BJ (cell line): ENCODE measurements at regions of chr7 and their contacts with region 1.

Region 1: DNA sequence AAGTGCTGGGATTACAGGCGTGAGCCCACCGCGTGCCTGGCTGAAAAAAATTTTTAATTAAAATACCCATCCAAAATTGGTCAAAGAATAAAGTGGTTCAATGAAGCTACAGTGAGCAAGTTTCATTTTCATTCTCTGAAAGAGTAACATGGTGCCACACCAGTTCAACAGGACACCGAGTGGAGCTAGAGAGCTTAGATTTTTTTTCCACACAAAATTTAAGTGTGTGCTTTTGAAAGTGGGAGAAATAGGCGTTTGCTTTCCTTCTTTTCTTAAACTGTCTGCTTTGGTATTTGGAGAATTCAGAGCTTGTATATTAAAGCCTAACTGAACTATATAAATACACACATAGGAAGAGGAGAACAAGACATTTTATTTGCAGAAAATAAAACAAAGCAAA is 43.4 kb downstream of the BPGM start:
- DNase-seq: no peak
- H3K4me3 ChIP-seq: no peak overlapping the region
- H3K27me3 ChIP-seq: no peaks in the 10 kb centered on the region
- CTCF ChIP-seq: peak; percentile 66

Region 2: DNA sequence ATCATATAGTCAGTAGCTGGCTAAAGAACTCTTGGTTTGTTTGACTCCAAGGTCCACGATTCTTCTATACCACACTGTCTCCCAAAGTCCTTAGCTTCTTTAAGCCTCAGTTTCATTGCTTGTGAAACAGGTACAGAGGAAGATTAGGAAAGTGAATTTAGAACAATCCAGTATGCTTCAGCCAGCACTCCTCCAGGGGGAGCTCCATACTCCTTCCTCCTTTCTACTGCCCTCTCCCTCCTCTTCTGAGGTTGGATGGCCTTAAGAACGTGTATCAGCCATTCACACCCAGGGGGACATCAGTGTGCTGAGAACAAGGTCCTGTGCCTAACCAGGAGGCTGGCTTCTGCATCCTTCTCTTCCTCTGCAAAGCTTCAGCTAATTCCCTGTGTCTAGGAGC is 34.6 kb after region 1 on chr7:
- CTCF ChIA-PET with region 1: interaction called, 17 read pairs
- POLR2A ChIA-PET with region 1: interaction called, 24 read pairs
- DNase-seq: no peak
- H3K4me3 ChIP-seq: no peak overlapping the region
- H3K27me3 ChIP-seq: no peaks in the 10 kb centered on the region
- CTCF ChIP-seq: peak; percentile 67

Region 3: DNA sequence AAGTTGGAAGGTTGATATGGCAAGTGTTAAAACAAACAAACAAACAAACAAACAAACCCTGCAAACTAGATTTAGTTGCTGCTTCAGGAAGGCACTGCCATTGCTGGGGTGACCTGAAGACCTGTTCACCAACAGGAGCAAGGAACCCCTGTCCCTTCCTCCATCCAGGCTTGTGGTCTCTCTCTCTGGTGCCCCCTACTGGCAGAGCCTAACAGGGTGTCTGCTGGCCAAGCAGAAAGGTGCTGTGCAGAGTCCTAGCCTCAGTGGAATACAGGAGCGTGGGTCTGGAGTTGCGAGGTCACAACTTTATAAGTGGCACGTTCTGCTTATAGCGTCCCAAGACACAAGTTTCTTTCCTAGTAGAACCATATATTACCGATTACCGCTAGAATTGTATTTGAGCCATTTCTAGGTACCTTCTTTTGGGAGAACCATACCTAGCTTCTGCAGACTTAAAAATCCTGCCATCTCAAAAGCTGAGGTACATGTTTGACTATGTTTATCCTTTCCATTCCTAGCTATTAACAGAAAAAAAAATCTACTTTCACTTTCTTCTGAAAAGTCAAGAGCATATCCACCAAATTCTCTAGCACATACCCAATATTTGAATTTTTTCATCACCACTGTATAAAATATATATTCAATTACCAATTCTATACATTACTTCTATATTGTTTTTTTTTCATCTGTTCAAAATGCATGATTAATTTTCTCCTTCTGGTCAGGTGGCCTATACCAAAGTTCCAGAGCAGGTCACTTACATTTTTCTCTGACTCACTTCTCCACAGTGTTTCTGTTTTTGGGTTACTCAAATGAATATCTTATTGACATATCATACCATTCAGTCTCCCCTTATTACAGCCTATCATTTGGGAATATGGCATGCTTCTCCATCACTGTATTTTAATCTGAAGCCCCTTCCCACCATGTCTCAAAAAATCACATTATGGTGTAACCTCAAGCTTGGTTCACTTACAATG is 60.4 kb after region 1 on chr7:
- CTCF ChIA-PET with region 1: interaction called, 50 read pairs
- POLR2A ChIA-PET with region 1: interaction called, 3 read pairs
- DNase-seq: no peak
- H3K4me3 ChIP-seq: no peak overlapping the region
- H3K27me3 ChIP-seq: no peaks in the 10 kb centered on the region
- CTCF ChIP-seq: peak; percentile 80

Region 4: GRCh38 chr7:134778941-134779740 is 89.1 kb after region 1 on chr7 and contains the start of gene CALD1:
- CTCF ChIA-PET with region 1: interaction called, 7 read pairs
- POLR2A ChIA-PET with region 1: interaction called, 33 read pairs
- DNase-seq: peak; percentile 99
- H3K4me3 ChIP-seq: peak within 1 kb of the TSS; percentile 55
- H3K27me3 ChIP-seq: no peaks in the 10 kb centered on the region
- CTCF ChIP-seq: no peak
- polyA plus RNA-seq, gene CALD1: 1,629 and 1,746 TPM in 2 replicates

Region 5: DNA sequence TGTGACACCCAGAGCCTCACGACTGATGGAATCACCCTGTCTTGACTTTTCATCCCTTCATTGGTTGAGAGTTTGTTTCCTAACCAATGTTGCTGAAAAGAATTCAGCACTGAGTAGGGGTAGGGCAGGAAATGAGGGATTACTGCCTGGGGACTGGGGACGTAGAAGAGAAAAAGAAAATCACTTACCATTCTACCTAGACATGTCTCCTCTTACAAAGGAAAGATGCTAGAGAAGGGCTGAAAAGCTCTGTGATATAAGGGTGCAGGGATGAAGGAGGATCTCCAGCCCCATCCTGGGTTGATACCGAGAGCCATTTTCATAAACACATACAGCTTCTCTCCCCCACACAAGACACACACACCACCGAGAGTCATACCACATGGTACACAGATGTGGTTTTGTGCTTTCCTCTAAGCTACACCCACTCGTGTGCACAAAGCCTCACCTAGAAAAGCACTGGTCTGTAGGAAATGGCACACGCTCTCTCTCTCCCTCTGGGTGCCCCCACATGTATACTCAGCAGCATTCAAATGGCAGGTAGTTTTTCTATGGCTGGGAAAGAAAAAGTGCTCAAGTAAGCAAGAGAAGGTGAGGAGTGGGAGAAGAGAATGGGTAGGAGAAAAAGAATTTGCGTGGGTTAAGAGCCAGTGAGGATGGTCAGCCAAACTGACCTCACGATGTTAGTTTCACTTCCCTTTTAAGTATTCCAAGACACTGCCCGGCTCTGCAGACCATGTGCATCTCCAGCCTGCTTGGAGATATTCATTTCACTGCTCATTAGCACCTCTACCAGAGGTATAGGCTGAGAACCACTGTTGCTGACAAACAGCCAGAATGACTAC is 175.2 kb after region 1 on chr7:
- CTCF ChIA-PET with region 1: no interaction called
- POLR2A ChIA-PET with region 1: no interaction called
- DNase-seq: no peak
- H3K4me3 ChIP-seq: peak overlapping the region; percentile 12; the same call in 1 of the 2 replicates
- H3K27me3 ChIP-seq: no peaks in the 10 kb centered on the region
- CTCF ChIP-seq: no peak

Region 6: GRCh38 chr7:135170274-135170997 is 480.4 kb after region 1 on chr7 and contains the start of gene CYREN:
- CTCF ChIA-PET with region 1: interaction called, 12 read pairs
- POLR2A ChIA-PET with region 1: no interaction called
- DNase-seq: no peak
- H3K4me3 ChIP-seq: peak within 1 kb of the TSS; percentile 82
- H3K27me3 ChIP-seq: no peaks in the 10 kb centered on the region
- CTCF ChIP-seq: peak; percentile 67
- polyA plus RNA-seq, gene CYREN: 35.4 and 39.4 TPM in 2 replicates